Panc1 (cell line): ENCODE measurements at regions of chr1 and their contacts with region 1.

Region 1: GRCh38 chr1:22025368-22026155 is 24.1 kb downstream of the CELA3A start:
- DNase-seq: peak; percentile 74
- ATAC-seq: peak; percentile 94
- H3K4me3 ChIP-seq: peak overlapping the region; percentile 94 to 97
- H3K27ac ChIP-seq: peak overlapping the region; percentile 98
- H3K4me1 ChIP-seq: peaks cover 15% of the 10 kb centered on the region
- H3K27me3 ChIP-seq: no peaks in the 10 kb centered on the region
- CTCF ChIP-seq: no peak

Region 2: GRCh38 chr1:21963477-21964217 is 61.9 kb before region 1 on chr1:
- CTCF ChIA-PET with region 1: no interaction called
- POLR2A ChIA-PET with region 1: no interaction called
- in situ Hi-C with region 1: no loop called
- intact Hi-C with region 1: no loop called
- DNase-seq: peak; percentile 62
- ATAC-seq: peak; percentile 91
- H3K4me3 ChIP-seq: no peak overlapping the region
- H3K27ac ChIP-seq: peak overlapping the region; percentile 32
- H3K4me1 ChIP-seq: peaks cover 8% of the 10 kb centered on the region
- H3K27me3 ChIP-seq: no peaks in the 10 kb centered on the region
- CTCF ChIP-seq: peak; percentile 93; the same call in 1 of the 2 replicates

Region 3: DNA sequence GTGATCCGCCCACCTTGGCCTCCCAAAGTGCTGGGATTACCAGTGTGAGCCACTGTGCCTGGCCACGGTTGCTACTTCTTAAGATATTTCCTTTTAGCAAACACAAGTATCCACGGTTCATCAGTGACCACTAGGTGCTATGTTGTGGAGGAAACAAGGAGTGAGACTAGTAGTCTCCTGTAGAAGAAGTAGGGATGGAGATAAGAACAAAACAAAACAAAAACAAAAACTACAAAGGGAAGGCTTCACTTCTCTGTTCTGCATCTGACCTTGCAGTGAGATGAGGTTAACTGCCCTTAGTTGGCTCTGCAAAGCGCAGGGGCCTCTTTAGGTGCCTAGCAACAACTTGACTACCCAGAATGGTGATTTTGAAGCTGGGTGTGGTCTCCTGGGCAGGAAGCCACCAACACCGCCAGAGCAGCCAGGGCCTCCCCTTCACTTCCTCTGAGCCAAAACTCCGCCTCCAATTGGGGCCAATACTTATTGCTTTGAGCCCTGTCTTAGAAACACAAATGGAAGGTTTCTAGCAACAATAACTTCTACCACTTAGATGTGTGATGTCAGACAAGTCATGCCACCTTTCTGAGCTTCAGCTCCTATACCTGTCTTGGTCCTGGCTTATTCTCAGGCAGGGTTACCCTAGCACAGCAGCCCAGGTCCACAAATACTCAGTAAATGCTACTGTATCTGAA is 14.2 kb after region 1 on chr1:
- CTCF ChIA-PET with region 1: interaction called, 10 read pairs
- POLR2A ChIA-PET with region 1: interaction called, 11 read pairs
- in situ Hi-C with region 1: no loop called
- intact Hi-C with region 1: no loop called
- DNase-seq: no peak
- ATAC-seq: peak; percentile 62; the same call in 1 of the 2 replicates
- H3K4me3 ChIP-seq: no peak overlapping the region
- H3K27ac ChIP-seq: no peak overlapping the region
- H3K4me1 ChIP-seq: no peaks in the 10 kb centered on the region
- H3K27me3 ChIP-seq: no peaks in the 10 kb centered on the region
- CTCF ChIP-seq: no peak

Region 4: DNA sequence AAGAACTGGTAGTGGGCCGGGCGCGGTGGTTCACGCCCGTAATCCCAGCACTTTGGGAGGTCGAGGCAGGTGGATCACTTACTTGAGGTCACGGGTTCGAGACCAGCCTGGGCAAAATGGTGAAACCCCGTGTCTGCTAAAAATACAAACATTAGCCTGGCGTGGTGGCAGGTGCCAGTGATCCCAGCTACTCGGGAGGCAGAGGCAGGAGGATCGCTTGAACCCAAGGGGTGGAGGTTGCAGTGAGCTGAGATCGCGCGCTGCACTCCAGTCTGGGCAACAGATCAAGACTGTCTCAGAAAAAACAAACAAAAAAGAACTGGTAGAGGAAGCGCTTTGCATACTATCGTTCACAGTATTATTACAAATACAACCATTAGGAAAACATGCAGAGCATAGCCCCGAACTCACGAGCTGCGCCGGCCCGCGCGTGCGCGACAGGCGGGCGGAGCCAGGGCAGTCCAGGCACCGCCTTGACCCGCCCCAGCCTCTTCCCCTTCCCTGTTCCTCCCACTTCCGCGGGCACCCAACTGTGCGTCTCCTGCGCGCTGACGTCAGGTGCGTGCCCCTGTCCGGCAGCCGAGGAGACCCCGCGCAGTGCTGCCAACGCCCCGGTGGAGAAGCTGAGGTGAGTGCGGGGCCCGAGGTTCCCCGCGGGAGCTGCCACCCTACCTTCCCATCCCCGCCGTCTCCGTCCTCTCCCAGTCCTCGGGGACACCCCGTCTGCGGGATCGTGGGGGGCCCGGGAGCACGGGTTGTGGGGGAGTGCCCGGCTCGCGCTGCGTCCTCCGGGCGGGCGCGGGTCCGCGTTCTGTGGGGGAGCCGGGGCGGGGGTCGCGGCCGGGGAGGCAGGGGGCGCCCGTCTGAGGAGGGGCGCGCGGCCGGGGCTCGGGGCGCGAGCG is 26.8 kb after region 1 on chr1 and contains the start of gene CDC42:
- CTCF ChIA-PET with region 1: interaction called, 3 read pairs
- POLR2A ChIA-PET with region 1: interaction called, 15 read pairs
- in situ Hi-C with region 1: no loop called
- intact Hi-C with region 1: no loop called
- DNase-seq: peak; percentile 60
- ATAC-seq: peak; percentile 98
- H3K4me3 ChIP-seq: peak within 1 kb of the TSS; percentile 86 to 88
- H3K27ac ChIP-seq: peak within 1 kb of the TSS; percentile 88
- H3K4me1 ChIP-seq: peaks cover 26% of the 10 kb centered on the region
- H3K27me3 ChIP-seq: no peaks in the 10 kb centered on the region
- CTCF ChIP-seq: no peak
- total RNA-seq, gene CDC42: 240 TPM

Region 5: DNA sequence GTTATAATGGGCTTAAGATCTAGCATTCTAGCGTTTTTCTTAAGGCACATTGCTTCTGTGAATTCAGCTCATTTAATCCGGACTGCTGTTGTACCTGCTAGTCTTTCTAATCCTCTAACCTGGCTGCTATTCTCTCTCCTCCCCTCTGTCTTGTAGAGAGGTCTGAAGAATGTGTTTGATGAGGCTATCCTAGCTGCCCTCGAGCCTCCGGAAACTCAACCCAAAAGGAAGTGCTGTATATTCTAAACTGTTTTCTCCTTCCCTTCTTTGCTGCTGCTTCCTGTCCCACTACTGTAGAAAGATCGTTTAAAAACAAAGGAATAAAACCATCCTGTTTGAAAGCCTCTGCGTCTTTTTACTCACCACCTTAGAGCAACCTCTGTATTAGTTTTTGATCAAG is 64.2 kb after region 1 on chr1:
- CTCF ChIA-PET with region 1: no interaction called
- POLR2A ChIA-PET with region 1: interaction called, 10 read pairs
- in situ Hi-C with region 1: no loop called
- intact Hi-C with region 1: no loop called
- DNase-seq: no peak
- ATAC-seq: 0 out of 2 replicates have a peak, but pooled peaks have one; percentile 31
- H3K4me3 ChIP-seq: no peak overlapping the region
- H3K27ac ChIP-seq: no peak overlapping the region
- H3K4me1 ChIP-seq: peaks cover 18% of the 10 kb centered on the region
- H3K27me3 ChIP-seq: no peaks in the 10 kb centered on the region
- CTCF ChIP-seq: no peak

Region 6: DNA sequence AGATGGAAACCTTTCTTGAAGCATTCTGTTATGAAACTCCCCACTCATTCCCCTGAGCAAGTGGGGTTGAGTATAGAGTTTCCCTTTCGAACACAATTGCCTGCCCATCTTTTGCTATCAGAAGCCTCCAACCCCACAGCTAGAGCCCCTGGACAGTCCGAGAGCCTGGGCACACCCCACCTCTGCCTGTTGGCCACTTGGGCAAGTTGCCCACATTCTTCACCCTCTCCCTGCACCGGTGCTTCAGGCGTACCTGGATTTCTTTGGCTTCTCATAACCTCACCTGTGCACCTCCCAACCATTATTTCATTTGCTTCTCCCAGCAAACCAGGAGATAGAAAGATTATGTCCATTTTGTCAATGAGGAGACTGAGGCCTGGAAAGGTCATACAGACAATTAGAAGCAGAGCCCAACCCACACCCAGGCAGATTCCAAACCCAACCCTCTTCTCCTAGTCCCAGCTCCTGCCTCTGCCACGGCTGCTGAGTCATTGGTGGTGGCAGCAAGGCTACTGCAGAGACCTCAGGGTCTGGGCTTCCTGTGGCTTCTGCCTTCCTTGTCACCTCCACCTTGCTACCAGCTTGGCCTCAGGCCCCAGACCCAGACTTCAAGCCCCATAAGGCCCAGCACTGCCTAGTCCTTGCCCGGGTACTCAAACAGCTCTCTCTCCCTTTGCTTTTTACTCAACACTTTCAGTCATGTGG is 307.4 kb after region 1 on chr1:
- CTCF ChIA-PET with region 1: no interaction called
- POLR2A ChIA-PET with region 1: no interaction called
- in situ Hi-C with region 1: no loop called
- intact Hi-C with region 1: no loop called
- DNase-seq: no peak
- ATAC-seq: no peak
- H3K4me3 ChIP-seq: no peak overlapping the region
- H3K27ac ChIP-seq: no peak overlapping the region
- H3K4me1 ChIP-seq: no peaks in the 10 kb centered on the region
- H3K27me3 ChIP-seq: peaks cover 2% of the 10 kb centered on the region; the same call in 1 of the 2 replicates
- CTCF ChIP-seq: no peak

Region 7: DNA sequence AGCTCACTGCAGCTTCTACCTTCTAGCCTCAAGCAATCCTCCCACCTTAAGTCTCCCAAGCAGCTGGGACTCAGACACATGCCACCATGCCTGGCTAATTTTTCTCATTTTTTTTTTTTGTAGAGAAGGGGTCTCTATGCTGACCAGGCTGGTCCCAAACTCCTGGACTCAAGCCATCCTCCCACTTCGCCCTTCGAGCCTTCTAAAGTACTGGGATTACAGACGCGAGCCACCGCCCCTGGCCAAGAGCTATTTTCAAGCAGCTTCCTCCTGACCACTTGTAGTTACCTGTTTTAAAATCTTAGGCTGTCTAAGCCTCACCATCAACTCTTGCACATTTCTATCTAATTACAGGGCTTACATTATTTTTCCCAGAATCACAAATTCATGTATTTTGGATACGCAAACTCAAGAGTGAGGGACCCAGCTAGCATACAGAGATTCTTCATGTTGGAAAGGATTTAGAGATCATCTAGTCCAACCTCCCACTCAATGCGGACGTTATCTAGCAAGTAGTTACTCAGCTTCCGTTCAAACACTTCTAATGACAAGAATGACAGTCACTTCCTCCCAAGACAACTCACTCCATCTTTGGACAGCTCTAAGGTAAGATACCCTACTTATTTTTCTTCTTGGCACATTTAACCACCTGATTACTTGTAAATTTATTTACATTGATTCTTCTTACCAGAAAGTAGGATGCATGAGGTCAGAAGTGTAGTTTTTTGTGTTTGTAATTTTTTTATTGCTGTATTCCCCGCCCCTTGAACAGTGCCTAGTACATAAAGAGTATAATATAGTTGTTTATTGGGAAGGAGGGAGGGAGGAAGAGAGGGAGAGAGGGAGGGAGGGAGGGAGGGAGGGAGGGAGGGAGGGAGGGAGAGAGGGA is 1077.7 kb after region 1 on chr1:
- CTCF ChIA-PET with region 1: no interaction called
- POLR2A ChIA-PET with region 1: no interaction called
- in situ Hi-C with region 1: no loop called
- intact Hi-C with region 1: no loop called
- DNase-seq: peak; percentile 74
- ATAC-seq: peak; percentile 66
- H3K4me3 ChIP-seq: no peak overlapping the region
- H3K27ac ChIP-seq: peak overlapping the region; percentile 20
- H3K4me1 ChIP-seq: peaks cover 46% of the 10 kb centered on the region
- H3K27me3 ChIP-seq: no peaks in the 10 kb centered on the region
- CTCF ChIP-seq: no peak